ENCODE measurements at regions of chr6 and their contacts with region 1.

Region 1: DNA sequence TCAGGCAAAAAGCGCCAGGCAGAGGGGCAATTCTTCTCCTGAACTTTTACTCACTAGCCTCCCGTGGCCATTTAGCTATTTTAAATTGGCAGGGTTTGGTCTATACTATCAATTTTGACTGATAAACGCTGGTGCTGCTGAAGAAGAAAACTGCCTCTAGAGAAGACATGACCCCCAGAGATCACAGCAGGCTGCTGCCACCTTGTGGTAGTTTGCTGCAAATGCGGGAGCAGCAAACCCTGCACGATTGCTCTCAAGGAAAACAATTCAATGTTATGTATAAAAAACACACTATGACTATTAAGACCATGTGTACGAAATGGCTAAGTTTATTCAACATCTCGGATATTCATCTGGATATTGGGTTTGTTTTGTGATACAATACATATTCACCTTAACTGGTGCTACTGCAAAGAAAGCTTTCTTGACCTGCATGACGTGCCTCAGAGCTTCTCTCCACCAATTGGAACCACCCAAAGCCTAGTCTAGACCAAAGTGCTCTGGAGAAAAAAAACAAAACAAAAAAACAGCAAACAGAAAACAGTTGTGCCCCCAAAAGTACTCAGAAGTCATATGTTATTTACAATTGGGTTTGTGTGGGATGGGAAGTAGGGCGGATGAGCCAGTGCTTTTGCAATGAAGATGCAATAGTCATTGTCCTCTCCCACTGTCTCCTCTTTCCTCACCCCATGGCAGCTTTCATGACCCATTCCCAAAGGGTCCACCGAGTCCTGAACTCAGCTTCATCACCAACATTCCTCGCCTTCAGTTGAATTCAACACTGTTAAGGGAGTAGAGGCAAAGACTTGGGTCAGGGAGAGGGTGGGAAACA is 19.6 kb upstream of the IL17F start:
- DNase-seq: peak; percentile 70
- ATAC-seq: peak; percentile 85
- H3K4me3 ChIP-seq: no peak overlapping the region
- H3K4me3 Mint-ChIP-seq: no peak overlapping the region
- H3K27ac ChIP-seq: no peak overlapping the region
- H3K27ac Mint-ChIP-seq: peak overlapping the region; percentile 23
- H3K4me1 ChIP-seq: no peaks in the 10 kb centered on the region
- H3K4me1 Mint-ChIP-seq: peaks cover 6% of the 10 kb centered on the region
- H3K27me3 ChIP-seq: no peaks in the 10 kb centered on the region
- H3K27me3 Mint-ChIP-seq: no peaks in the 10 kb centered on the region
- CTCF ChIP-seq: peak; percentile 97

Region 2: GRCh38 chr6:52162940-52163908 is 100.7 kb before region 1 on chr6:
- CTCF ChIA-PET with region 1: interaction called, 3 read pairs
- POLR2A ChIA-PET with region 1: no interaction called
- intact Hi-C with region 1: loop called (anchors 2 kb)
- DNase-seq: peak; percentile 13
- ATAC-seq: no peak
- H3K4me3 ChIP-seq: no peak overlapping the region
- H3K4me3 Mint-ChIP-seq: no peak overlapping the region
- H3K27ac ChIP-seq: no peak overlapping the region
- H3K27ac Mint-ChIP-seq: no peak overlapping the region
- H3K4me1 ChIP-seq: no peaks in the 10 kb centered on the region
- H3K4me1 Mint-ChIP-seq: no peaks in the 10 kb centered on the region
- H3K27me3 ChIP-seq: no peaks in the 10 kb centered on the region
- H3K27me3 Mint-ChIP-seq: peaks cover 10% of the 10 kb centered on the region
- CTCF ChIP-seq: peak; percentile 26

Region 3: GRCh38 chr6:52389626-52390360 is 125.9 kb after region 1 on chr6:
- CTCF ChIA-PET with region 1: interaction called, 11 read pairs
- POLR2A ChIA-PET with region 1: no interaction called
- intact Hi-C with region 1: no loop called
- DNase-seq: peak; percentile 19
- ATAC-seq: peak; percentile 35
- H3K4me3 ChIP-seq: peak overlapping the region in 3 of 5 experiments; percentile 5 to 46 (median 21)
- H3K4me3 Mint-ChIP-seq: peak overlapping the region; percentile 66
- H3K27ac ChIP-seq: peak overlapping the region in 1 of 2 donors; percentile 24
- H3K27ac Mint-ChIP-seq: peak overlapping the region; percentile 79
- H3K4me1 ChIP-seq: peaks cover 16 to 23% of the 10 kb centered on the region in 2 donors
- H3K4me1 Mint-ChIP-seq: peaks cover 40% of the 10 kb centered on the region
- H3K27me3 ChIP-seq: no peaks in the 10 kb centered on the region
- H3K27me3 Mint-ChIP-seq: no peaks in the 10 kb centered on the region
- CTCF ChIP-seq: no peak

Measured in B cell (primary cell).